Transverse colon (tissue), 4 donors: ENCODE measurements at regions of chr14 and their contacts with region 1.

Region 1: DNA sequence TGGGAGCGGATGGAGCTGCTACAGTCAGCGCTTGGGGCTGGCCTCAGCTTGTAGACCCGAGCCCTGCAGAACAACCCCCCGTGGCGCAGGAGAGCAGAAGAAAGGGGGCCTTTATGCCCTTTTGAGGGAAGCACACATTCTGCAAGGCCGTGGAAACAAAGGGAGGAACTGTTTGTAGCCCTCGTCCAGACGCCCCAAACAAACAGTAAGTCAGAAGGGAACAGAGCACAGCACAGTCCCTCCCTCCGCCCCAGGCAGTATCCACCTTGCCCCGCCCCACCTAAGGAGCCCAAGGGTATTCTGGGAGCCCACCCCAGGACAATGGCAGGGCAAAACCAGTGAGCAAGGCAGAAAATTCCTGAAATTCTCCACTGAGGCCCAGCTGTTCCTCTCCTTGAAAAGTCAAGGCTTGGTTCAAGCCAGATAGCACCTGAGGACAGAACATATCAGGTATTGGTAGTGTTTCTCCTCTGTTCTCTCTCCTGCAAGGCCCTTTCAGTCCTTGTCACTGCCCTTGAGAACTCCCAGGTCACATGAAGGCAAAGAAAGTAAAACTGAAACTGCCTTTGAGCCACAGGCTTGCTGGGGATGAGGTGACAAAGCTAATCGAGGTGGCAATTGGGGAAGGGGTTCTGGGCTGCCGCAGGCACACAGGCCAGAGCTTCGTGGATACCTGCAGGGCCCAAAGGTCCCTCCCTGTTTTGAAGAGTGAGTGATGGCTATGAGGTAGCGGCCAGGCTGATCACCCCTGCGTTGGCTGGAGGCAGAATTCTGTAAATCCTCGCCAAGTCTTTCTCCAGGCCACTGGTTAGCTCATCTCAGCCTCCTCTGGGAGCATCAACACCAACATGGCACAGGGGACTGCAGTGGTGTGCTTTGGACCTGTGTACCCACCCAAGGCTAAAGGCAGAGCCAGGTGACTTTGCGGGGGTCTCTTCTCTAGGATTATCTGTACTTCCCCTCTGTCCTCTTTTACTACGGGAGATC is 499 bp downstream of the DGLUCY start:
- DNase-seq: peak; percentile 75
- H3K4me3 ChIP-seq: peak overlapping the region; percentile 43 to 61 (median 55)
- H3K27ac ChIP-seq: peak overlapping the region; percentile 95 to 99 (median 97)
- H3K4me1 ChIP-seq: peaks cover 15 to 58% (median 51%) of the 10 kb centered on the region in 4 donors
- H3K27me3 ChIP-seq: no peaks in the 10 kb centered on the region
- CTCF ChIP-seq: no peak
- EP300 ChIP-seq: no peak
- POLR2A ChIP-seq: peak; percentile 67

Region 2: GRCh38 chr14:91060351-91061055 is 53.9 kb before region 1 on chr14 and contains the start of gene RPS6KA5:
- in situ Hi-C with region 1: no loop called
- intact Hi-C with region 1: loop called (anchors 2 kb)
- DNase-seq: peak; percentile 100
- H3K4me3 ChIP-seq: peak within 1 kb of the TSS; percentile 86 to 96 (median 94)
- H3K27ac ChIP-seq: peak within 1 kb of the TSS; percentile 97 to 100 (median 99)
- H3K4me1 ChIP-seq: peaks cover 0 to 44% (median 20%) of the 10 kb centered on the region in 4 donors
- H3K27me3 ChIP-seq: no peaks in the 10 kb centered on the region
- CTCF ChIP-seq: peak in 4 of 5 experiments; percentile 22 to 74 (median 46)
- EP300 ChIP-seq: no peak
- POLR2A ChIP-seq: peak; percentile 92
- total RNA-seq, gene RPS6KA5: 7.5 to 32.8 (median 28.0) TPM